Panc1 (cell line): ENCODE measurements at regions of chr5 and their contacts with region 1.

Region 1: GRCh38 chr5:18699681-18700080 is 1065.4 kb downstream of the TAF11L14 start:
- DNase-seq: no peak
- ATAC-seq: no peak
- H3K4me3 ChIP-seq: no peak overlapping the region
- H3K27ac ChIP-seq: no peak overlapping the region
- H3K4me1 ChIP-seq: no peaks in the 10 kb centered on the region
- H3K27me3 ChIP-seq: no peaks in the 10 kb centered on the region
- CTCF ChIP-seq: no peak

Region 2: GRCh38 chr5:18393589-18394442 is 305.9 kb before region 1 on chr5:
- CTCF ChIA-PET with region 1: interaction called, 3 read pairs
- POLR2A ChIA-PET with region 1: no interaction called
- in situ Hi-C with region 1: no loop called
- intact Hi-C with region 1: loop called (anchors 1 kb)
- DNase-seq: peak; percentile 64
- ATAC-seq: peak; percentile 81
- H3K4me3 ChIP-seq: no peak overlapping the region
- H3K27ac ChIP-seq: no peak overlapping the region
- H3K4me1 ChIP-seq: peaks cover 9% of the 10 kb centered on the region; the same call in 1 of the 2 replicates
- H3K27me3 ChIP-seq: no peaks in the 10 kb centered on the region
- CTCF ChIP-seq: peak; percentile 91

Region 3: DNA sequence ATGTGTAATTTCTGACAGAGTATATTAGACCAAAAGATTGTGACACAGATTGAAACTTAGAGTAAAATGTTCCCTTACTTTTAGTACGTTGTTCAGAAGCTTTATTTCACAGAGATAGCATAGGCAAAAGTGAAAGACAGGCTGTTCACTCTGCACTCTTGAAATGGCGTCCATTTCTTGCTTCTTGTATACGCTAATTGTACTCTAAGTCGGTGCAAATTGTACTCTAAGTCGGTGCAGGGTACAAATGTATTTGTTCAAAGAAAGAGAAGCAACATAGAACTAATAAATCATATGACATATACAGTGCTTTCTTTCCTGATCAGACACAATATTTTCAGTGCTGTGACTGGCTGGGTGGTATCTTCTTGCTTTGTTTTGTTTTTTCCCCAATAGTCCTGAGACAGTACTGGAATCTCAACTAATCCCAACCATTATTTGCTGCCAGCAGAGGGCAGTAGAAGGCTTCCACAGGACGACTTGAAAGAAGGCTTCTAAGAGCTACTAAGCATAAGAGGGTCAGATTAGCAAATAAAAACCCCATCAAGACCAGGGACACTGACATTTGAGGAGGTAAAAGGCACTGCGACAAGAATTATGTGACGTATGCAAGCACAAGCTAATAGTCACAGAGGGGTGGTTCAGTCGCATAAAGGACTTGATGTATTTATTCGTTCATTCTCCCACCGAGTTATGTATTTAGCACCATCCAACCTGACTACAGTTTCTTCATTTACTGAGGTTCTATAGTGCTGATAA is 233.7 kb before region 1 on chr5:
- CTCF ChIA-PET with region 1: no interaction called
- POLR2A ChIA-PET with region 1: no interaction called
- in situ Hi-C with region 1: no loop called
- intact Hi-C with region 1: loop called (anchors 1 kb)
- DNase-seq: peak; percentile 77
- ATAC-seq: peak; percentile 96
- H3K4me3 ChIP-seq: peak overlapping the region; percentile 15 to 28
- H3K27ac ChIP-seq: peak overlapping the region; percentile 15; the same call in 1 of the 2 replicates
- H3K4me1 ChIP-seq: 0 out of 2 replicates have a peak, but pooled peaks cover 5% of the 10 kb centered on the region
- H3K27me3 ChIP-seq: no peaks in the 10 kb centered on the region
- CTCF ChIP-seq: peak; percentile 82

Region 4: GRCh38 chr5:18497089-18497488 is 202.6 kb before region 1 on chr5:
- CTCF ChIA-PET with region 1: no interaction called
- POLR2A ChIA-PET with region 1: no interaction called
- in situ Hi-C with region 1: no loop called
- intact Hi-C with region 1: no loop called
- DNase-seq: no peak
- ATAC-seq: no peak
- H3K4me3 ChIP-seq: no peak overlapping the region
- H3K27ac ChIP-seq: no peak overlapping the region
- H3K4me1 ChIP-seq: no peaks in the 10 kb centered on the region
- H3K27me3 ChIP-seq: no peaks in the 10 kb centered on the region
- CTCF ChIP-seq: no peak

Region 5: GRCh38 chr5:19002111-19002510 is 302.4 kb after region 1 on chr5:
- CTCF ChIA-PET with region 1: no interaction called
- POLR2A ChIA-PET with region 1: no interaction called
- in situ Hi-C with region 1: no loop called
- intact Hi-C with region 1: no loop called
- DNase-seq: no peak
- ATAC-seq: no peak
- H3K4me3 ChIP-seq: no peak overlapping the region
- H3K27ac ChIP-seq: no peak overlapping the region
- H3K4me1 ChIP-seq: no peaks in the 10 kb centered on the region
- H3K27me3 ChIP-seq: no peaks in the 10 kb centered on the region
- CTCF ChIP-seq: no peak

Region 6: GRCh38 chr5:19676895-19677294 is 977.2 kb after region 1 on chr5:
- CTCF ChIA-PET with region 1: no interaction called
- POLR2A ChIA-PET with region 1: no interaction called
- in situ Hi-C with region 1: no loop called
- intact Hi-C with region 1: no loop called
- DNase-seq: no peak
- ATAC-seq: no peak
- H3K4me3 ChIP-seq: no peak overlapping the region
- H3K27ac ChIP-seq: no peak overlapping the region
- H3K4me1 ChIP-seq: no peaks in the 10 kb centered on the region
- H3K27me3 ChIP-seq: no peaks in the 10 kb centered on the region
- CTCF ChIP-seq: no peak

Region 7: DNA sequence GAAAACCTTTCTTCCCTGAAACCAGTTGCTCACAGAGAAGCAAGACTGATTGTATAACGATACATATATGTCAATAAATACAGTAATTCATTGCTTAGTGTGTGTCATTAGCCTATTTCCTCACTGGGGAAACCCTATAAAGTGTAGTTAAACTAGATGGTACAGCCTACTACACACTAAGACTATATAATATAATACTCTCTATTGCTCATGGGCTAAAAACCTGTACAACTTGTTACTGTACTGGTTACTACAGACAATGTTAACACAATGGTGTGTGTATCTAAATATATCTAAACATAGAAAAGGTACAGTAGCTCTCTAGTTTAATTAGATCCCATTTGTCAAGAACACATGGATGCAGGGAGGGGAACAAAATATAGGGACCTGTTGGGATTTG is 1107.1 kb after region 1 on chr5:
- CTCF ChIA-PET with region 1: no interaction called
- POLR2A ChIA-PET with region 1: interaction called, 12 read pairs
- in situ Hi-C with region 1: no loop called
- intact Hi-C with region 1: no loop called
- DNase-seq: no peak
- ATAC-seq: no peak
- H3K4me3 ChIP-seq: no peak overlapping the region
- H3K27ac ChIP-seq: no peak overlapping the region
- H3K4me1 ChIP-seq: no peaks in the 10 kb centered on the region
- H3K27me3 ChIP-seq: no peaks in the 10 kb centered on the region
- CTCF ChIP-seq: no peak